Activated B cell treated with CpG ODN at 0.5 μM for 24 hours (primary cell): ENCODE measurements at regions of chr3 and their contacts with region 1.

Region 1: DNA sequence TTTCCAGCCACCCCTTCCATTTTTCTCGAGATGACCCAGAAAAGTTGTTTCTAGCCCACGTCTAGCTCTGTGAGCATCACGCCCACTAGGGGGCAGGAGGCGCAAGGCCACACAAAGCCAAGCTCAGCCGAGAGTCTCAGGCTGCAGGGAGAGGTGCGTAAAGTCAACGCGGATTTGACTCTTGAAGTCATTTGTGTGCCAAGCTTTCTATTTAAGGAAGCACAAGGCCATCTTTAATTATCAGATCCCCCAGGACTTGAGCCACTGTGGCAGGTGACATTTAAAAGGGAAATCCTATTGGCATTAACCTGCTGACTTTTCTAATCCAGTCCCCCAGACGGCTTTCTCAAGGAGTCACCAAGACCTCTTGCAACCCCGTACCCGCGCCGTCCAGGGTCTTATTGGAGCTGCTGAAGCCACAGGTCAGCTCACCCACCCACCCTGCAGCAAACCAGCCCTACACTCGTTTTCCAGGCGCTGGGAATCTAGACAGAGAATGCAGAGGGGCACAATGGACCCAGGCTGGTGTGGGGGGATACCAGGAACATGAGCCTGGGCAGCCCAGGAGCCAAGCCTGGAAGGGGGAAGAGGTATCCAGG is 62.1 kb downstream of the CAPN7 start:
- DNase-seq: peak; percentile 70
- ATAC-seq: peak; percentile 40
- H3K4me3 Mint-ChIP-seq: peak overlapping the region; percentile 46
- H3K27ac Mint-ChIP-seq: no peak overlapping the region
- H3K4me1 Mint-ChIP-seq: peaks cover 89% of the 10 kb centered on the region
- H3K27me3 Mint-ChIP-seq: no peaks in the 10 kb centered on the region
- CTCF ChIP-seq: peak; percentile 65

Region 2: DNA sequence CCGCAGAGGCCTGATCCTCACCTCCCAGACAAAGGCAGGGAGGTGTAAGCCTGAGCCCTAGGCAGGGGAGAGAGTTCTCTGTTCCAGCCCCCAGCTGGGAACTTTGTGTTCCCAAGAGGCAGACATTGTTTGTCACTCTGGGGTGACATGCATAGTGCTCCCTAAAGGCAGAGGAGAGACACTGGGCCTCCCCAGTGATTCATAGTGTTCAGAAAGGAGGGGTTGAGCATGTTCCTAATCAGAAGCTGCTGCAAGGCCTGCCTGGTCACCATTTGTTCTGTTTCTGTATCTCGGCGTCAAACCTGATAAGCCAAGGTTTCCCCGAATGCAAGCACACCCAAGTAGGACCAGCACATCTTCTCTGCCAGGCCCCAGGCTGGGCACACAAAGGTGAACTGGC is 889.7 kb before region 1 on chr3:
- CTCF ChIA-PET with region 1: no interaction called
- POLR2A ChIA-PET with region 1: no interaction called
- intact Hi-C with region 1: no loop called
- DNase-seq: no peak
- ATAC-seq: no peak
- H3K4me3 Mint-ChIP-seq: no peak overlapping the region
- H3K27ac Mint-ChIP-seq: no peak overlapping the region
- H3K4me1 Mint-ChIP-seq: peaks cover 7% of the 10 kb centered on the region
- H3K27me3 Mint-ChIP-seq: peaks cover 8% of the 10 kb centered on the region
- CTCF ChIP-seq: no peak

Region 3: GRCh38 chr3:15291589-15292541 is 23.7 kb after region 1 on chr3:
- CTCF ChIA-PET with region 1: interaction called, 13 read pairs
- POLR2A ChIA-PET with region 1: interaction called, 14 read pairs
- intact Hi-C with region 1: loop called (anchors 1 kb)
- DNase-seq: peak; percentile 46
- ATAC-seq: peak; percentile 78
- H3K4me3 Mint-ChIP-seq: peak overlapping the region; percentile 66
- H3K27ac Mint-ChIP-seq: peak overlapping the region; percentile 91
- H3K4me1 Mint-ChIP-seq: peaks cover 97% of the 10 kb centered on the region
- H3K27me3 Mint-ChIP-seq: no peaks in the 10 kb centered on the region
- CTCF ChIP-seq: no peak

Region 4: DNA sequence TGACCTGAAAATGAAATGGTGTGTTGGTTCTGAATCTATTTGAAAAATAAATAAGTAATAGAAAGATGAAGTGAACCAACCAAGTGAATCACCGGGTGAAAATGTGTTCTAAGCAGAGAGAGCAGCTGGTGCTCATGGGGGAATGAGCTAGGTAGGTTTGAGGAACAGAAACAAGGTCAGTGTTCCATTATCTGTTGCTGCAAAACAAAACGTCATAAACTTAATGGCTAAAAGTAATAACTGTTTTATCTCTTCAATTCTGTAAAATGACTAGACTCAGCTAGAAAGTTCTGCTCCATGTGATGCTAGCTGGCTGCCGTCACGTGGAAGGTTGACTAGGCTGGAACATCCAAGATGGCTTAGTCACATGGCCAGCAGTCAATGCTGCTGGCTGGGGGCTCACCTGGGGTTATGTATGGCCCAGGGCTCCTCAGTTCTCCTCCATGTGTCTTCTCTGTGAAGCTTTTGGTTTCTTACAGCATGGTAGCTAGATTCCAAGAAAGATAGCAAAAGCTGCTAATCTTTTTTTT is 77.5 kb after region 1 on chr3:
- CTCF ChIA-PET with region 1: interaction called, 13 read pairs
- POLR2A ChIA-PET with region 1: interaction called, 5 read pairs
- intact Hi-C with region 1: loop called (anchors 1 kb)
- DNase-seq: peak; percentile 53
- ATAC-seq: peak; percentile 90
- H3K4me3 Mint-ChIP-seq: peak overlapping the region; percentile 59
- H3K27ac Mint-ChIP-seq: peak overlapping the region; percentile 98
- H3K4me1 Mint-ChIP-seq: peaks cover 84% of the 10 kb centered on the region
- H3K27me3 Mint-ChIP-seq: no peaks in the 10 kb centered on the region
- CTCF ChIP-seq: no peak

Region 5: GRCh38 chr3:15384510-15385237 is 116.5 kb after region 1 on chr3:
- CTCF ChIA-PET with region 1: interaction called, 105 read pairs
- POLR2A ChIA-PET with region 1: interaction called, 21 read pairs
- intact Hi-C with region 1: no loop called
- DNase-seq: no peak
- ATAC-seq: peak; percentile 90
- H3K4me3 Mint-ChIP-seq: peak overlapping the region; percentile 71
- H3K27ac Mint-ChIP-seq: peak overlapping the region; percentile 95
- H3K4me1 Mint-ChIP-seq: peaks cover 79% of the 10 kb centered on the region
- H3K27me3 Mint-ChIP-seq: no peaks in the 10 kb centered on the region
- CTCF ChIP-seq: no peak

Region 6: GRCh38 chr3:15427182-15427880 is 159.2 kb after region 1 on chr3 and contains the starts of genes EAF1 and METTL6:
- CTCF ChIA-PET with region 1: interaction called, 3 read pairs
- POLR2A ChIA-PET with region 1: interaction called, 3 read pairs
- intact Hi-C with region 1: loop called (anchors 1 kb)
- DNase-seq: peak; percentile 76
- ATAC-seq: peak; percentile 92
- H3K4me3 Mint-ChIP-seq: peak within 1 kb of the TSS; percentile 96
- H3K27ac Mint-ChIP-seq: peak within 1 kb of the TSS; percentile 95
- H3K4me1 Mint-ChIP-seq: peaks cover 50% of the 10 kb centered on the region
- H3K27me3 Mint-ChIP-seq: no peaks in the 10 kb centered on the region
- CTCF ChIP-seq: no peak
- total RNA-seq, gene EAF1: 19.2 and 19.7 TPM in 2 replicates
- total RNA-seq, gene METTL6: 18.7 and 20.2 TPM in 2 replicates